Heart right ventricle (tissue), 16 donors: ENCODE measurements at regions of chr1 and their contacts with region 1.

Region 1: GRCh38 chr1:8314346-8315280 is 3.3 kb upstream of the SLC45A1 start:
- DNase-seq: peak; percentile 68 to 69
- ATAC-seq: peak; percentile 68 to 85 (median 77)
- H3K4me3 ChIP-seq: no peak overlapping the region
- H3K27ac ChIP-seq: no peak overlapping the region
- H3K4me1 ChIP-seq: peaks cover 3 to 35% (median 16%) of the 10 kb centered on the region in 9 donors
- H3K27me3 ChIP-seq: peaks cover 0 to 48% (median 0%) of the 10 kb centered on the region in 7 donors
- CTCF ChIP-seq: peak; percentile 71 to 88 (median 84)

Region 2: DNA sequence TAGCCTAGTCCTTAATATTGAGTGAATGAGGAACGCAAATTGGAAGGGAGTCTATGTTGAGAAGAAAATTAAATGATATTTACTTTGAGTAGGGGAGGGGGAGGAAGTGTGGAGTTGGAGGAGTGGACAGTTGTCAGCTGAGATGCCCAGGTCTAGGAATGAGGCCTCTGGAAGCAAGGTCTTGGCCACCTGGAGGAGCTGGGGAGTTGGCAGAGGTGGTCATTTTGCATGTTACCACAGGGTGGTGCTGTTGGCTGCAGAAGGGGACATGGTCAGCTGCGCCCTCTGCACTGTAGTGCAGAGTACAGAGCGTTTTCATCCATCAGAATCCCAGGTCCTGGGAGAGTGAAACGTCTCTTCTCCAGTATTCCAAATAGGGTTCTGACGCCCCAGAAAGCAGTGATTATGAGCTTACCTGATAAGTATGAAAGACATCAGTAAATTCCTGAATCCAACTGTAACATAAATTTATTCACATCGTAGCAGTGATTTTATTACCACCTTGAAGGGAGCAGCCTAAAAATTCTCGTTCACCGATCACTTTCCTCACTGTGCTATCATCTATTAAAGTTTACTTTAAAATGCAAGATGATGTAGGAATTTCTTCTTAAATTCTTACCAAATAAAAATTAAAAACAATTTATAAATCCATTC is 339.3 kb before region 1 on chr1:
- intact Hi-C with region 1: loop called in 7 of 10 experiments (anchors 2 to 10 kb)
- DNase-seq: peak; percentile 59 to 60
- ATAC-seq: peak; percentile 74 to 98 (median 94)
- H3K4me3 ChIP-seq: no peak overlapping the region
- H3K27ac ChIP-seq: no peak overlapping the region
- H3K4me1 ChIP-seq: peaks cover 0 to 16% (median 7%) of the 10 kb centered on the region in 9 donors
- H3K27me3 ChIP-seq: no peaks in the 10 kb centered on the region
- CTCF ChIP-seq: peak; percentile 69 to 89 (median 81)

Region 3: DNA sequence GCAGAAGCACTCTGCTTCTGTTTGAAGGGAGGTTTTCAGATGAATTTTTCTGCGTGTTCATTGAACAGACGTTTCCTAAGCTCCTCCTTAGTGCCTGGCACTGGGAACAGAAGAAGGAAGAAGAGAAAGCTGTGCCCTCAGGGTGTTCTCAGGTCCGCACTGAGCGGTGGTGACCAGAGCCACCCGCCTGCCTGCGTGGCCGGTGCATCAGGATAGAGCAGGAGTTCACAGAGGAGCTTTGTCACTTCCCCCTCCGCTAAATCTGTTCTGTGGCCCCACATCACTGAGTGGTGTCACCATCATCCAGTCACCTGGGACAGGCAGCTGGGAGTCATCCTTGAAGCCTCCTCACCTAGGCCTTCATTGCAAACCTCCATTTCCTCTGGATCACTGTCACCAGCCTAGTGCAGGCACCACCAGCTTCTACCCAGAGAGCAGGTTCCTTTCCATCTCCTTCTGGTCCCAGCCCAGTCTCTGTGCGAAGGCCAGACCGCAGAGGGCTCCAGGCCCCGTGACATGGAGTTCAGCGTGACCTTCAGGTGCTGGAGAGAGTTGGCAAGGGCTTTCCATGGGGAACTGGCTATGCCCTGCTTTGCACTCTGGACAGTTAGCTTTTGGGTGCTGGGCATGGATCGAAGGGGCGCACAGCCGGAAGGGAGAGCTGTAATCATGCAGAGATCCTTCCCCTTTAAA is 331.4 kb before region 1 on chr1:
- intact Hi-C with region 1: loop called (anchors 2 to 10 kb)
- DNase-seq: peak in 1 of 2 donors; percentile 7
- ATAC-seq: peak in 6 of 8 donors; percentile 54 to 71 (median 68)
- H3K4me3 ChIP-seq: no peak overlapping the region
- H3K27ac ChIP-seq: peak overlapping the region in 1 of 10 donors; percentile 4
- H3K4me1 ChIP-seq: peaks cover 0 to 26% (median 15%) of the 10 kb centered on the region in 9 donors
- H3K27me3 ChIP-seq: no peaks in the 10 kb centered on the region
- CTCF ChIP-seq: no peak

Region 4: GRCh38 chr1:7989762-7990428 is 324.7 kb before region 1 on chr1:
- intact Hi-C with region 1: loop called in 2 of 10 experiments (anchors 10 kb)
- DNase-seq: no peak
- ATAC-seq: peak in 3 of 8 donors; percentile 22 to 64 (median 46)
- H3K4me3 ChIP-seq: no peak overlapping the region
- H3K27ac ChIP-seq: no peak overlapping the region
- H3K4me1 ChIP-seq: peaks cover 0 to 8% (median 0%) of the 10 kb centered on the region in 9 donors
- H3K27me3 ChIP-seq: no peaks in the 10 kb centered on the region
- CTCF ChIP-seq: no peak

Region 5: DNA sequence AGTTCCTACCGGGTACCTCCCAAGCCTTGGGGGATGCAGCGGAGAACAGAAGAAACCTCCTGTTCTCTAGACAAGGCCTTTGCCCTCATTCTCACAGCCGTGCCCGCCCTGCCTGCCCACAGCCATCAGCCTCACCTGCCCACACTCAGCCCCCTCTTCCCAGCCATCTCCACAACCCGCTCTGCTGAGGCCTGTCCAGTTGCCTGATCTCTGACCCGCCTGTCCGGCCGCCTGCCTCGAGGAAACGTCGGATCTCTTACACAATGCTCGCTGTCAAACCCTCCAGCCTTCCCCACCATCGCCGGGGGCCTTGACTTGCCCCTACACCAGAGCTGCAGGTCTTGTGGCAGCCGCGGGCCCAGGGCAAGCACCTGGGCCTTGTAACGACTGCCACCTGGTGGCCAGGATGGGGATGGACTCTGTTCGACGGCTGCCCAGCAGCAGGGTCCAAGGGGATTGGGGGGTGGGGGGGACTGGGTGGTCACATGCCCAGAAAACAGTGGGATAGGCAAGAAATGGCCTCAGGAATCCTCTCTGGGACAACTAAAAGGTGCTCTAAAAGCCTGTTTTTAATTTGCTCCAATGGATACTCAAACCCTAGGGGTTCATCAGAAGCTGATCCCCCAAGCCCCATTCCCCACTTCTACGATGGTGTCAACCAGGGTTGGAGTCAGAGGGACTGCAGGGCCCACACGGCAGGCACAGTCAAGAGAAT is 34.3 kb after region 1 on chr1:
- intact Hi-C with region 1: no loop called
- DNase-seq: peak; percentile 63 to 76
- ATAC-seq: peak; percentile 32 to 73 (median 58)
- H3K4me3 ChIP-seq: no peak overlapping the region
- H3K27ac ChIP-seq: no peak overlapping the region
- H3K4me1 ChIP-seq: peaks cover 9 to 60% (median 42%) of the 10 kb centered on the region in 9 donors
- H3K27me3 ChIP-seq: no peaks in the 10 kb centered on the region
- CTCF ChIP-seq: peak; percentile 80 to 90 (median 85)